Activated B cell treated with CpG ODN at 0.5 μM for 24 hours (primary cell): ENCODE measurements at regions of chr1 and their contacts with region 1.

Region 1: DNA sequence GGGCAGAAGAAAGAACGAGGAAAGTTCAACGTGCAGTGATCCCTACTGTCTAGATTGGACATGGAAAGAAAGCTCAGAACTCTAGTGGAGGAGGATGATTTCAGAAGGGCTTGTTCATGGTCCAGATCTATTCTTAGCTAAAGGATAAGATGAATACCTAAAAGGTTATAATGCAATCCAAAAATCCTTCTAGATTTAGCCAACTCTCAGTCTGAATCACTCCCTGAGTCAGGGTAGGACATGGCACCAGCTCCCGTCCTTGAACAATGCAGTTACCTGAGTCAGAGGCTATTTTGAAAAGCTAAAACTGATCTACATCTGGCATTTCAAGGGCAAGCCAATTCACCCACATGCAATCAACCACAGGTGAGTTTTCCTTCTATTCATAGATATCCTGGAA is 38.8 kb upstream of the HIVEP3 start:
- DNase-seq: no peak
- ATAC-seq: no peak
- H3K4me3 Mint-ChIP-seq: no peak overlapping the region
- H3K27ac Mint-ChIP-seq: no peak overlapping the region
- H3K4me1 Mint-ChIP-seq: no peaks in the 10 kb centered on the region
- H3K27me3 Mint-ChIP-seq: peaks cover 5% of the 10 kb centered on the region
- CTCF ChIP-seq: no peak

Region 2: GRCh38 chr1:43660355-43660754 is 1702.8 kb after region 1 on chr1:
- CTCF ChIA-PET with region 1: no interaction called
- POLR2A ChIA-PET with region 1: interaction called, 10 read pairs
- intact Hi-C with region 1: no loop called
- DNase-seq: no peak
- ATAC-seq: no peak
- H3K4me3 Mint-ChIP-seq: no peak overlapping the region
- H3K27ac Mint-ChIP-seq: no peak overlapping the region
- H3K4me1 Mint-ChIP-seq: peaks cover 4% of the 10 kb centered on the region
- H3K27me3 Mint-ChIP-seq: no peaks in the 10 kb centered on the region
- CTCF ChIP-seq: no peak